Activated CD4-positive, alpha-beta T cell treated with anti-CD3 and anti-CD28 coated beads, Interleukin-2, amount 10 ng/mL, durations not matched to agents 7 days and 5 days (primary cell): ENCODE measurements at regions of chr2 and their contacts with region 1.

Region 1: GRCh38 chr2:102442967-102443828 is 20.2 kb downstream of the IL18RAP start:
- DNase-seq: peak; percentile 68
- H3K4me3 Mint-ChIP-seq: peak overlapping the region; percentile 0
- H3K27ac Mint-ChIP-seq: peak overlapping the region; percentile 70
- H3K4me1 Mint-ChIP-seq: peaks cover 11% of the 10 kb centered on the region
- H3K27me3 Mint-ChIP-seq: no peaks in the 10 kb centered on the region

Region 2: DNA sequence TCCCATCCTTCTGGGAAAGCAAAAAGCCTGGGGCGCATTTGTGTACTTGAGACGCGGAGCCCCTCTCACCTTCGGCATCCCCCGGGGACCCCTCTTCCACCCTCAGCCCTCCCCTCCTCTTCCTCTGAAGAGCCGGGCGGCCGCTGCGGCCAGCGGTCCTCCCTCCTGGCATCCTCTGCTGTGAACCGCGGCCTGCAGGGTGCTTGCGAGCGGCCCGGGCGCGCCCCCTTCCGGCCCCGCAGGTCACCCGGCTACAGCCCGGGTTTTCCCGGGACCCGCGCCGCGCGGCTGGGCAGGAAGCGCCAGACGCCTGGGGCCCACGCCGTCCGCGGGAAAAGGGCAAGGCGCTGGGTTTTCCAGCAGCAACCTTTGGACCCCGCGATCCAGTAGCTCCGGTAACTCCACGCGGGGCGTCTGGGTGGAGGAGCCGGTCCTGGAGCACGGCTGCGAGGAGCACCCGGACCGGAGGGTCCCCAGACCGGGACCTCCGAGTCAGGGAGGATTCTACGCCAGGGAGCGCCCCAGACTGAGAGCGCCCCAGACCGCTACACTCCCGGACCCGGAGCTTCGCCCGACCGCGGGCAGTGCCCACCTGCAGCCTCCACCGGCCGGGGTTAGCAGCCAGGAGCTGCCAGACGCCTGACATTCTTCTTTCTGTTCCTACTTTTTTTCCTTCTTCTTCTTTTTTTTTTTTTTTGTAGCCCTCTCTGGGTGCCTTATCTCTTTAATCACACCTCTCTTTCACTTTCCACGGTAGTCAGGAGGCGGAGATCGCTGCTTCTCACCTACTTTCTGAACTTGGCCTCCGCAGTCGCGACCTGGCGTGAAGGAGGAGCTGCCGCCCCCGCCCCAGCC is 87.4 kb before region 1 on chr2 and contains the start of gene IL18R1:
- CTCF ChIA-PET with region 1: interaction called, 10 read pairs
- POLR2A ChIA-PET with region 1: no interaction called
- DNase-seq: peak; percentile 66
- H3K4me3 Mint-ChIP-seq: peak within 1 kb of the TSS; percentile 99
- H3K27ac Mint-ChIP-seq: peak within 1 kb of the TSS; percentile 99
- H3K4me1 Mint-ChIP-seq: peaks cover 43% of the 10 kb centered on the region
- H3K27me3 Mint-ChIP-seq: no peaks in the 10 kb centered on the region
- total RNA-seq, gene IL18R1: 19.2 to 22.1 TPM

Region 3: DNA sequence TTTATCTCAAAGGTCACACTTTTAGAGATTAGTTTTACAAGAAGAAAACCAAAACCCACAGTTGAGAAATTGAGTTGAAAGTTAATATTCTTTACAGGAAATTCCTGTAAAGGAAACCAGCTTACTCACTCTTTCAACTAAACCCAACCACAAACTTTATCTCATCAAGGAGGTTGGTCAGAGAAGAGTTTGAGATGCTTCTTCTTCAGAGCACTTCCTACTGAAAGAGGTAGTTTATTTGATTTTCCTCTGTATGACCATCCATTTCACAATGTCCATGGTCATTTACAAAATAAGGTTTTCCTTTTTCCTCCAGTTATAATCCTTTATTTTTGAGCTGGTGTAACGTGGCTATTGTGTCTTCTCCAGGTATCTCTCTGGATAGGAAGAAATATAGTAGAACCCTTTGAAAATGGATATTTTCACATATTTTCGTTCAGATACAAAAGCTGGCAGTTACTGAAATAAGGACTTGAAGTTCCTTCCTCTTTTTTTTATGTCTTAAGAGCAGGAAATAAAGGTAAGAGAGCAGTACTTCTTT is 24.7 kb before region 1 on chr2:
- CTCF ChIA-PET with region 1: interaction called, 10 read pairs
- POLR2A ChIA-PET with region 1: no interaction called
- DNase-seq: peak; percentile 33
- H3K4me3 Mint-ChIP-seq: peak overlapping the region; percentile 66
- H3K27ac Mint-ChIP-seq: peak overlapping the region; percentile 94
- H3K4me1 Mint-ChIP-seq: peaks cover 65% of the 10 kb centered on the region
- H3K27me3 Mint-ChIP-seq: no peaks in the 10 kb centered on the region